CD4-positive, alpha-beta T cell (primary cell): ENCODE measurements at regions of chr1 and their contacts with region 1.

Region 1: GRCh38 chr1:154220071-154220969 is at the start of gene UBAP2L:
- DNase-seq: peak; percentile 97 to 100 (median 99)
- ATAC-seq: peak; percentile 83
- H3K4me3 ChIP-seq: peak within 1 kb of the TSS; percentile 95
- H3K4me3 Mint-ChIP-seq: peak within 1 kb of the TSS; percentile 91
- H3K27ac ChIP-seq: peak within 1 kb of the TSS; percentile 99
- H3K27ac Mint-ChIP-seq: peak within 1 kb of the TSS; percentile 93
- H3K4me1 ChIP-seq: peaks cover 43% of the 10 kb centered on the region
- H3K4me1 Mint-ChIP-seq: peaks cover 74% of the 10 kb centered on the region
- H3K27me3 ChIP-seq: no peaks in the 10 kb centered on the region
- H3K27me3 Mint-ChIP-seq: no peaks in the 10 kb centered on the region
- CTCF ChIP-seq: no peak
- total RNA-seq, gene UBAP2L: 224 to 234 TPM

Region 2: DNA sequence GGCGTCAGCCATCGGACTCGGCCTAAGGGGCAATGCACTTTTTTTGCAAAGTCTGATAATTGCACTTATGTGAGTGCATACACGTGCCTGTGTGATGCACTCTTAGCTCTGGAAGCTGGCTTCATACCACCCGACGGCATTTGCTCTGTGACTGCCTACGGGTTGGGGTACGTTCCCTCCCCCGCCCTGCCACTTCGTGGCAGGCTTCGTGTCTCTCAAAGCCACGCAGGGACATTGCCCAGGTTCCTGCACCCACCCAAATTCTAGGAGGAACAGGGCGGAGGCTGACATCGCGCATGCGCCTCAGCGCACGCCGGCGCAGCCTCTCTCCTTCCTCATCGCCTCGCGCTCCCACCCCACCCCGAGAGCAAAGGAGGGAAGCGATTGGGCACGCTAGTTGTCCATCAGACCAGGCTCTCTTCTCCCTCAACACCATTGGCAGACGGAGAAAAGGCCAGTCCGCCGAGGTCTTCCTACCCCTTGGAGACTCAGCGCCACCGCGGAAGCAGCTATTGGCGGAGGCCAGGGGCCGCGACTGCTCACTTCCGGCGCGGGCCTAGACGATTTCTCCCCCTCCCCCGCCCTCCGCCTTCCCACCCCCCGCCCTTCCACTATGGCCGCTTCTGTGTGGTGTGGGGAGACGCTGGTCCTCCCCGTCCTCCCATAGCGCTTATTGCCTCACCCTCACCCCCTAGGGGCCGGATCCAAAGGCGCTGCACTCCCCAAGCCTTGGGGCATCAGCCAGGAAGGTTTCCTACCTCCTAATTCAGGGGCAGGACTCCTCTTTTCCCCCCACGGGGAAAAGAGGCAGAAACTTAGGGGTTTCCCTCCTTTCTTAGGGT is 492.6 kb before region 1 on chr1 and contains the start of gene INTS3:
- CTCF ChIA-PET with region 1: no interaction called
- POLR2A ChIA-PET with region 1: no interaction called
- intact Hi-C with region 1: loop called in 1 of 2 experiments (anchors 5 kb)
- DNase-seq: peak; percentile 95 to 100 (median 99)
- ATAC-seq: peak; percentile 99
- H3K4me3 ChIP-seq: peak within 1 kb of the TSS; percentile 71
- H3K4me3 Mint-ChIP-seq: peak within 1 kb of the TSS; percentile 95
- H3K27ac ChIP-seq: peak within 1 kb of the TSS; percentile 91 to 94
- H3K27ac Mint-ChIP-seq: peak within 1 kb of the TSS; percentile 84
- H3K4me1 ChIP-seq: peaks cover 23% of the 10 kb centered on the region
- H3K4me1 Mint-ChIP-seq: peaks cover 29% of the 10 kb centered on the region
- H3K27me3 ChIP-seq: no peaks in the 10 kb centered on the region
- H3K27me3 Mint-ChIP-seq: no peaks in the 10 kb centered on the region
- CTCF ChIP-seq: no peak
- total RNA-seq, gene INTS3: 24.9 to 27.4 TPM

Region 3: GRCh38 chr1:154097873-154098272 is 122.4 kb before region 1 on chr1:
- CTCF ChIA-PET with region 1: no interaction called
- POLR2A ChIA-PET with region 1: no interaction called
- intact Hi-C with region 1: no loop called
- DNase-seq: no peak
- ATAC-seq: no peak
- H3K4me3 ChIP-seq: no peak overlapping the region
- H3K4me3 Mint-ChIP-seq: no peak overlapping the region
- H3K27ac ChIP-seq: no peak overlapping the region
- H3K27ac Mint-ChIP-seq: no peak overlapping the region
- H3K4me1 ChIP-seq: no peaks in the 10 kb centered on the region
- H3K4me1 Mint-ChIP-seq: no peaks in the 10 kb centered on the region
- H3K27me3 ChIP-seq: no peaks in the 10 kb centered on the region
- H3K27me3 Mint-ChIP-seq: no peaks in the 10 kb centered on the region
- CTCF ChIP-seq: no peak

Region 4: GRCh38 chr1:154157520-154158306 is 62.6 kb before region 1 on chr1:
- CTCF ChIA-PET with region 1: no interaction called
- POLR2A ChIA-PET with region 1: interaction called, 26 read pairs
- intact Hi-C with region 1: loop called in 1 of 2 experiments (anchors 5 kb)
- DNase-seq: peak; percentile 49 to 91 (median 65)
- ATAC-seq: peak; percentile 98
- H3K4me3 ChIP-seq: no peak overlapping the region
- H3K4me3 Mint-ChIP-seq: peak overlapping the region; percentile 74
- H3K27ac ChIP-seq: peak overlapping the region; percentile 55 to 68
- H3K27ac Mint-ChIP-seq: peak overlapping the region; percentile 92
- H3K4me1 ChIP-seq: peaks cover 53% of the 10 kb centered on the region
- H3K4me1 Mint-ChIP-seq: peaks cover 74% of the 10 kb centered on the region
- H3K27me3 ChIP-seq: no peaks in the 10 kb centered on the region
- H3K27me3 Mint-ChIP-seq: no peaks in the 10 kb centered on the region
- CTCF ChIP-seq: no peak

Region 5: GRCh38 chr1:154198756-154199562 is 21.4 kb before region 1 on chr1:
- CTCF ChIA-PET with region 1: no interaction called
- POLR2A ChIA-PET with region 1: interaction called, 16 read pairs
- intact Hi-C with region 1: no loop called
- DNase-seq: peak in 11 of 14 experiments; percentile 5 to 81 (median 30)
- ATAC-seq: peak; percentile 90
- H3K4me3 ChIP-seq: no peak overlapping the region
- H3K4me3 Mint-ChIP-seq: no peak overlapping the region
- H3K27ac ChIP-seq: no peak overlapping the region
- H3K27ac Mint-ChIP-seq: no peak overlapping the region
- H3K4me1 ChIP-seq: peaks cover 3% of the 10 kb centered on the region
- H3K4me1 Mint-ChIP-seq: no peaks in the 10 kb centered on the region
- H3K27me3 ChIP-seq: no peaks in the 10 kb centered on the region
- H3K27me3 Mint-ChIP-seq: peaks cover 3% of the 10 kb centered on the region
- CTCF ChIP-seq: peak; percentile 71

Region 6: GRCh38 chr1:154272217-154272998 is 52.1 kb after region 1 on chr1 and contains the start of gene HAX1:
- CTCF ChIA-PET with region 1: interaction called, 3 read pairs
- POLR2A ChIA-PET with region 1: interaction called, 12 read pairs
- intact Hi-C with region 1: loop called (anchors 1 kb)
- DNase-seq: peak; percentile 90 to 99 (median 94)
- ATAC-seq: peak; percentile 85
- H3K4me3 ChIP-seq: peak within 1 kb of the TSS; percentile 82
- H3K4me3 Mint-ChIP-seq: peak within 1 kb of the TSS; percentile 96
- H3K27ac ChIP-seq: peak within 1 kb of the TSS; percentile 81 to 89
- H3K27ac Mint-ChIP-seq: peak within 1 kb of the TSS; percentile 97
- H3K4me1 ChIP-seq: peaks cover 27% of the 10 kb centered on the region
- H3K4me1 Mint-ChIP-seq: peaks cover 37% of the 10 kb centered on the region
- H3K27me3 ChIP-seq: no peaks in the 10 kb centered on the region
- H3K27me3 Mint-ChIP-seq: no peaks in the 10 kb centered on the region
- CTCF ChIP-seq: peak; percentile 76
- total RNA-seq, gene HAX1: 57.5 to 62.5 TPM

Region 7: DNA sequence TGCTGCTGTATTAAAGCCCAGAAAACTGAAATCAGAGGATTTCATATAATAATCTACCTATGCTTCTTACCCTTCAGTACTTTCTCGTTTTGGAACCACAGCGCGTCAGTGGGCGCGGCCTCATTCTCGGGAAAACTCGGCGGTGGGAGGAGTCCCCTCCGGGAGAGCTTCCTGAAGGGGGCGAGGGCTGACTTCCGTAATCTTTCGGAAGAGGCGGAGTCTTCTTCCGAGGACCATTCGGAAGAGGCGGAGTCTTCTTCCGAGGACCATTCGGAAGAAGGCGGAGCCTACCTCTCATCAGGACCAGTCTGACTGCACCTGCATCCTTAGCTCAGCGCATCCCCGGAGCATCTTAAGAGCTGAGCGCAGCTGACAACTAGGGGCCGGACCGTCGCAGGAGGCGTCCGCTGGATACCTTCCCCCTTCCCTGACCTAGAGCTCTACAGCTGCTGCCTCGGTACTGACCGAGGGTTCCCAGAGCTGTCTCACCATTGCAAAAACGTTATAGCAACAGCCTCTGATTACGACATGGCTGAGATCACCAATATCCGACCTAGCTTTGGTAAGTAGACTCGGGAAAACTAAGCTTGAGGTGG is 1639.0 kb after region 1 on chr1 and contains the start of gene SYT11:
- CTCF ChIA-PET with region 1: no interaction called
- POLR2A ChIA-PET with region 1: no interaction called
- intact Hi-C with region 1: loop called in 1 of 2 experiments (anchors 2 kb)
- DNase-seq: peak; percentile 83 to 97 (median 92)
- ATAC-seq: peak; percentile 89
- H3K4me3 ChIP-seq: peak within 1 kb of the TSS; percentile 62
- H3K4me3 Mint-ChIP-seq: peak within 1 kb of the TSS; percentile 93
- H3K27ac ChIP-seq: peak within 1 kb of the TSS; percentile 42 to 81
- H3K27ac Mint-ChIP-seq: peak within 1 kb of the TSS; percentile 81
- H3K4me1 ChIP-seq: peaks cover 38% of the 10 kb centered on the region
- H3K4me1 Mint-ChIP-seq: peaks cover 33% of the 10 kb centered on the region
- H3K27me3 ChIP-seq: peaks cover 0 to 8% of the 10 kb centered on the region in 2 experiments
- H3K27me3 Mint-ChIP-seq: peaks cover 25% of the 10 kb centered on the region
- CTCF ChIP-seq: no peak
- total RNA-seq, gene SYT11: 6.1 to 6.3 TPM